ENCODE measurements at regions of chr3 and their contacts with region 1.

Region 1: DNA sequence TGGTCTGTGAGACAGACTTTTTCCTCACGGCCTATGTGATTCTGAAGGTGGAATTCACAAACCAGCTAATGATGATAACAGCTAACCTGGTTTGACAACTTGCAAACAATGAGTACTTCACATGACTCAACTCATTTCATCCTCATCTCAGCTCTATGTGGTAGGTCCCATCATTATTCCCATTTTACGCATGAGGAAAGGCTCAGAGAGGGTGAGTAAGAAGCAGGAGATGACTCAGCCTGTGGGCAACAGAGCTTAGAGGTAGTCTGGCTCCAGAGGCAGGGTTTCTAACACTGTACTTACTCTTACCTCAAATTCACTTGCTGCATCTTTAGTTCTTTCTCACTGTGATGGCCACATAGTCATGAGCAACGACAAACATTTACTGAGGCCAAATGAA is 25.8 kb upstream of the PSMD6 start:
- DNase-seq: no peak
- ATAC-seq: no peak

Region 2: DNA sequence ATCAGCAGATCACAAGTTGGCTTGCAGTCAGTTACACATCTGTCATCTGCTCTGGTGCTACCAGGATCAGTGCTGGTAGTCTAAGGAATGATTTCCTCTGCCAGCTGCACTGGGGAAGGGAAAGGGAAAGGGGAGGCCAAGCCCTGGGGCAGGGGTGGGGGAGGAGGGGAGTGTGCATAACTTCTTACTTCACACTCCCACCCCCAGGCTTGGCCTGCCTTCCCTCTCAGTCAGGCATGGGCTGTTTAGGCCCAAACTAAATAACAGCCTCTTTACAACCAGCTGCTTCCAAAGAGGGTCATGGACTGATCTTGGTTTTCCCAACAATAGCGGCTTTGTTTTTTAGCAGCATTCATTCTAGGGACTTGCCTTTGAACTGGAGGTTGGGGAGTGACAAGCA is 60.3 kb after region 1 on chr3:
- intact Hi-C with region 1: loop called in 1 of 2 experiments (anchors 10 kb)
- DNase-seq: peak; percentile 30
- ATAC-seq: peak in 1 of 2 donors; percentile 69